ENCODE measurements at regions of chr14 and their contacts with region 1.

Region 1: DNA sequence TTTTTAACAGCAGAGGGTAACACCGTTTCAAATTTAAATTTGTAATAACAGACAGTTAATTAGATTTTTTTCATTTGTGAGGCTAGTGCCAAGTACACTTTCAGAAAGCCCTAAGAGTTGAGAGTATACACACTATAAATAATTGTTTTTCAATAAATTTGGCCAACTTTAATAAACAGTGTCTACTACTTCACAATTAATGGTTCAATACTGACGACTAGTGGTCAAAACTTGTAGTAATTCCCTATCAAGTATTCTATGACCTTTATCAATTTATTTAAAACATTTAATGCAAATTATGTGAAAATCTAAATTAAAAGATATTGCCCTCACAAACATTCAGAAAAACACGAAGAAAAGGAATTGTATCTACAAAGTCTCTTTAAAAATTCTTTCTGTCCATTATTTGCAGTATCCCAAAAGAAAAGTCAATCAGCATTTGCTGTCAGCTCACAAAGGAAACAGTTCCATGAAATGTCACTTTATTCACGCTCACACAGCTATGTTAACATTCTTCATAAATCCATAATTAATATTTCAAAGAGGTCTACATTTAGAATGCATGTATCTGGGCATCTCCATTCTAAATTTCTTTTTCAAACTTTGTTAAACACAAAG is 91.2 kb downstream of the CEP128 start:
- DNase-seq: no peak
- ATAC-seq: no peak
- H3K4me3 Mint-ChIP-seq: no peak overlapping the region
- H3K27ac Mint-ChIP-seq: no peak overlapping the region
- H3K4me1 Mint-ChIP-seq: no peaks in the 10 kb centered on the region
- H3K27me3 Mint-ChIP-seq: no peaks in the 10 kb centered on the region
- CTCF ChIP-seq: peak; percentile 46

Region 2: GRCh38 chr14:78959674-78960264 is 1890.5 kb before region 1 on chr14:
- CTCF ChIA-PET with region 1: no interaction called
- POLR2A ChIA-PET with region 1: no interaction called
- intact Hi-C with region 1: loop called (anchors 2 kb)
- DNase-seq: no peak
- ATAC-seq: no peak
- H3K4me3 Mint-ChIP-seq: no peak overlapping the region
- H3K27ac Mint-ChIP-seq: no peak overlapping the region
- H3K4me1 Mint-ChIP-seq: peaks cover 2% of the 10 kb centered on the region
- H3K27me3 Mint-ChIP-seq: peaks cover 5% of the 10 kb centered on the region
- CTCF ChIP-seq: peak; percentile 32

Region 3: DNA sequence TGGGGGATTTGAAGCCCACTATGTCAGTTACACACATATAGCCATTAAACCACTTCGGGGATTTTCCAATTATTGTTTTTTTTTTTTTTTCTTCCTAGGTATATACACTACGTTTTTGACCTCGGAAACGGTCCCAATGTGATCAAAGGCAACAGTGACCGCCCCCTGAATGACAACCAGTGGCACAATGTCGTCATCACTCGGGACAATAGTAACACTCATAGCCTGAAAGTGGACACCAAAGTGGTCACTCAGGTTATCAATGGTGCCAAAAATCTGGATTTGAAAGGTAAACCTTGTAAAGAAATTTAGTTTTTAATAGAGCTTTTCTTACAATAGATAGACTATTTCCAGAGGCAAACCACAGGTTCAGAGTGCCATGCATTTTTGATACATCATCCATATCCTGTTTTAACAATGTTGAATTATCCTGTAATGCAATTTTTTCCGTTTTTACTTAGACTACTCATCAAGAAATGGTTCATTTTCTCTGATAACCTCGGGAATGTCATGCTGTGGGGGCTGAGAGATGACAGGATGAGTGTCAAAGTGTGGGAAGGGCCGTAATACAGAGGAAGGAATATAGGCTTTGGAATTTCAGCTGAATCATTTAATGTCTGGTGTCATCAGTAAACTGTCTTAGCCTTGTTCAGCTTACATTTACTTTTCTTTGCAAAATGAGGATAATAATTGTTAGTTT is 1883.0 kb before region 1 on chr14:
- CTCF ChIA-PET with region 1: interaction called, 7 read pairs
- POLR2A ChIA-PET with region 1: no interaction called
- intact Hi-C with region 1: loop called (anchors 1 kb)
- DNase-seq: no peak
- ATAC-seq: no peak
- H3K4me3 Mint-ChIP-seq: no peak overlapping the region
- H3K27ac Mint-ChIP-seq: no peak overlapping the region
- H3K4me1 Mint-ChIP-seq: no peaks in the 10 kb centered on the region
- H3K27me3 Mint-ChIP-seq: peaks cover 3% of the 10 kb centered on the region
- CTCF ChIP-seq: no peak

Region 4: DNA sequence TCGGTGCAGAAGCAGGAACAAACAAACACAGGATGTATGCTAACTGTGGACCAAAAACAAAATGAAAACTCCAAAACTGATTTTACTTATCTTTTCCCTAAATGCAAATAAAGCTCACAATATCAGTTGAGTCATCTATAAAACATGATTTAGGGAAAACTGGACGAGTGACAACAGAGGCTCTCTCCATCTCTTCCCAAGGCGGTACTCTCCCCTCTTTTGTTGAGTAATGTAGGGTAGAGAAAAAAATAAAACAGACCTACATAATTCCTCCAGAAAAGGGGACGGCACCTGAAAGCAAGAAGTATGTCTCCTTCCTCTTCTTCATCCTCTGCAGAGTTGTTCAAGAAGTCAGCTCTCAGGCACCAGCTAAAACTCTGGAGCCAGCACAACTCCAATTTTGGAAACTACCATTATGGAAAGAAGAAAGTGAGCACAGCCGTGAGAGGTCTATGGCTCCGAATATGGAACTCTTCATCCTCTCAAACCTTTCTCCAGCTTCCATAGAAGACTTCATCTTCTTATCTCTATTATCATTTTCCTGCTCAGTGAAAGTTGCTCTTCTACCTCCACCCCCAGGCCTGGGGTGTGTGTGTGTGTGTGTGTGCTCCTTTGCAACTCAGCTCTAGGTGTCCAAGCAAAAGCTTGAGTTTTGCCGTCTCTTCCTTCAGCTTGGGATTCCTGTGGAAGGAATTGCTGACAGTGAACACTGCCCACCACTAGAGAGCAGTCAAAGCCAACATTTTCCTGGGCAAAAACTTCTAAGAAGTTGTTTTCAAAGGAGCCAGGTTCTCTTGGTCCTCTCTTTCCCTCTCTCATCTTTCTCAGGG is 794.4 kb before region 1 on chr14:
- CTCF ChIA-PET with region 1: no interaction called
- POLR2A ChIA-PET with region 1: no interaction called
- intact Hi-C with region 1: loop called (anchors 2 kb)
- DNase-seq: no peak
- ATAC-seq: no peak
- H3K4me3 Mint-ChIP-seq: no peak overlapping the region
- H3K27ac Mint-ChIP-seq: no peak overlapping the region
- H3K4me1 Mint-ChIP-seq: no peaks in the 10 kb centered on the region
- H3K27me3 Mint-ChIP-seq: no peaks in the 10 kb centered on the region
- CTCF ChIP-seq: no peak